AG04449 (cell line): ENCODE measurements at regions of chr7 and their contacts with region 1.

Region 1: GRCh38 chr7:22082886-22083703 is 137.4 kb upstream of the CDCA7L start:
- DNase-seq: no peak
- H3K4me3 ChIP-seq: peak overlapping the region; percentile 75
- CTCF ChIP-seq: peak; percentile 98

Region 2: GRCh38 chr7:20816372-20816959 is 1266.6 kb before region 1 on chr7:
- CTCF ChIA-PET with region 1: no interaction called
- POLR2A ChIA-PET with region 1: no interaction called
- DNase-seq: no peak
- H3K4me3 ChIP-seq: no peak overlapping the region
- CTCF ChIP-seq: no peak

Region 3: GRCh38 chr7:22094413-22095342 is 11.6 kb after region 1 on chr7:
- CTCF ChIA-PET with region 1: interaction called, 47 read pairs
- POLR2A ChIA-PET with region 1: interaction called, 3 read pairs
- DNase-seq: no peak
- H3K4me3 ChIP-seq: no peak overlapping the region
- CTCF ChIP-seq: no peak

Region 4: DNA sequence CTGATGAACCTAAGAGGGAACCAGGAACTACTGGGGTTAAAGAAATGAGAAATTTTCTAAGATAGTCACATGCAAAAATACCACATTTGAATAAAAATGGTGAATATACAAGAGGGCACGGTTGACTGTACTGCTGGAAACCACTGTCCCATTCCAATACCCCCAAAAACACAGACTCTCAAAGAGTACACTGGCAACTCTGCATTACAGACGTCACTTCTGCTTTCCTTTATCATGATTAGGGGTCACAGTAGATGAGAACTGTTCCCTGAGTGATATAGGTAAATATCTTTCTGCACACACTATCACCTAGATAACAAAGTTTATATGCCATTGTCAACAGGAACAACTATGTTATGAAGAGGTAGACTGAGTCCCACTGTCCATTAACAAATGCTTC is 204.3 kb after region 1 on chr7:
- CTCF ChIA-PET with region 1: no interaction called
- POLR2A ChIA-PET with region 1: no interaction called
- DNase-seq: no peak
- H3K4me3 ChIP-seq: no peak overlapping the region
- CTCF ChIP-seq: no peak